ENCODE measurements at regions of chr6 and their contacts with region 1.

Region 1: DNA sequence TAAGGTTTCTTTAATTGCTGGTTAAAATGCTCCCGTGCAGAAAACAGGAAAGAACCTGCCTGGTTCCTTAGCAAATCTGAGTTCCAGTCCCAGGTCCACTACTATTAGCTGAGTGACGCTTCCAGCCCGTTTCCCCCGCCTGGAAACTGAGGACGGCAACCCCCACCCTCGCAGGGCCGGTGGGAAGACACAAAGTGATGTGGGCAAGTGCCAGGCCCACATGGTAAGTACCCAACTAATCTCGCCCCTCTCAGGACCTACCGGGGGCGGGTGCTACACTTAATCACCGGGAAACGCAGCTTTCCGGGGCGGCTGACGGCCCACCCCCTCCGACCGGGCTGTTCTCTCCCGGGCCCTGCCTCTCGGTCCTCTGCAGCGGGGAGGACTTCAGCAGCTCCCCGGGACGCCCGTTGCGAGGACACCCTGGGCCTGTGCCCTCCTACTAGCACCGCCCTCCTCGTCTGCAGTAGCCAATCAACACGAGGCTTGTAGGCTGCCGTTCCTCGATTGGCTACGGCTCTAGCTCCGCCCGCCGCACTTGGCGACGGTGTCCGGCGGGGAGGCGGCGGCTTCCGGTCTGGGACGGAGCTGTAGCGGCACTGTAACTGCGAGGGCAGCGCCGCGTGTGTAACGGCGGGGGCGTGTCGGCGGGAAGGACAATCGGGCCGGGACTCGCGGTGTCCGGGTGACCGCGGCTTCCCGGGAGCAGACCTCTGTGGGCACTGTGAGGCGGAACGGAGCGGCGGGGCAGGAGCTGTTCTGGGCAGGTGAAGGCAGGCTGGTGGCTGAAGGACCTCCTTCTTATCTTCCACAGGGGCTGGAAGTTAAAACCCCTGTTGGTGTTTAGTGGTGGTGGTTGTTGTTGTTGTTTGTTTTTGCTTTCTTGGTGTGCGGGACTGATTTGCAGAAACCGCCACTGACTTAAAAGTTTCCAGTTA is at the start of gene ZBTB9:
- DNase-seq: peak; percentile 97
- H3K4me3 ChIP-seq: peak within 1 kb of the TSS; percentile 77
- H3K27ac ChIP-seq: peak within 1 kb of the TSS; percentile 30
- H3K4me1 ChIP-seq: peaks cover 19% of the 10 kb centered on the region
- CTCF ChIP-seq: no peak
- total RNA-seq, gene ZBTB9: 7.7 and 11.2 TPM in 2 replicates

Region 2: DNA sequence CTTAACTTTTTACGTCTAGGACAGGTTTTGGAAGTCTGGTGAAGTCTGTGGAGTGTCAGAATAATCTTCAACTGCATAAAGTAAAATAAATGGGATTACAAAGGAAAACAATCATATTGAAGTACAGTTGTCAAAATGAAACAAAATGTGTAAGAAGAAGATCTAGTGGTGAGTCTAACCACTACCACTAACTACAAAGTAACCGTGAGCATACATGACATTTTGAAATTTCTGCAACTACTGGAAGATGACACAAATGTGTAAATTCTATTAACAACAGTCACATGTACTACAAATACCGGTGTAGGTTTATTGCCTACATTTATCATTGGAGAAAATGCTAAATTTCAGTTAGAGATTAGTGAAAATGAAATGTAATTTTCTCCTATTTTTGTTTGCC is 212.3 kb before region 1 on chr6:
- CTCF ChIA-PET with region 1: no interaction called
- POLR2A ChIA-PET with region 1: interaction called, 10 read pairs
- intact Hi-C with region 1: no loop called
- DNase-seq: no peak
- H3K4me3 ChIP-seq: no peak overlapping the region
- H3K27ac ChIP-seq: no peak overlapping the region
- H3K4me1 ChIP-seq: no peaks in the 10 kb centered on the region
- CTCF ChIP-seq: no peak

Region 3: GRCh38 chr6:33570806-33571636 is 116.7 kb after region 1 on chr6:
- CTCF ChIA-PET with region 1: no interaction called
- POLR2A ChIA-PET with region 1: no interaction called
- intact Hi-C with region 1: loop called (anchors 2 kb)
- DNase-seq: peak; percentile 94
- H3K4me3 ChIP-seq: peak overlapping the region; percentile 69
- H3K27ac ChIP-seq: peak overlapping the region; percentile 95
- H3K4me1 ChIP-seq: peaks cover 22% of the 10 kb centered on the region
- CTCF ChIP-seq: 0 out of 2 replicates have a peak, but pooled peaks have one; percentile 15